H1 (cell line): ENCODE measurements at regions of chr10 and their contacts with region 1.

Region 1: DNA sequence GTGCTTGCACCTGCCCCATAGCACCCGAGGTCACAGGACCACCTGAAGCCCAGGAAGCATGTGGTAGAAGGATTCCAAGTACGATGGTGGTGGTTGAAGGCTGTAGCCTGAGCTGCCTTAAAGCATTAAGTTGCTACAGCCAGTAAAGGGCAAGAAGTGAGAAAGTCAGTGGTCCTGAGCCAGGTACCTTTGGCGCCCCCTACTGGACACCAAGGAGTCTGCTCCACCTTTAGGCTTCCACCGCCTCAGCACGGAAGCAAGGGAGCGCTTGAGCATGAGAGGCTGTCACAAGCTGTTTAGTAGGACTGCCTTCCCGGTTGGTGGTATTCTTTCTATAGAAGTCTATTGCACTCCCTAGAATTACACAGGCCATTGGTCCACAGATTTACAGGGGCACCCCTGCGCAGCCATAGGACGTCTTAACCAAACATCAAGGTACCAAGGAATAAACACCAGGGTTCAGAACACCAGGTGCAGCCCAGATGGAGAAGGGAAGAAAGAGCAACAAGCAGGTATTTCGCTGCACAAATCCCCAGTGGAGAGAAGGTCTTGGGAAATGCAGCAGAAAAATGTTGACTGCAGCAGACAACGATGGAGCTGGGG is 2.2 kb downstream of the CRTAC1 start:
- DNase-seq: peak; percentile 34 to 89
- H3K4me3 ChIP-seq: no peak overlapping the region
- H3K27ac ChIP-seq: no peak overlapping the region
- H3K4me1 ChIP-seq: peaks cover 2 to 7% (median 6%) of the 10 kb centered on the region in 4 experiments; a peak in 5 of 7 replicates
- H3K27me3 ChIP-seq: peaks cover 40 to 50% (median 49%) of the 10 kb centered on the region in 4 experiments
- CTCF ChIP-seq: peak; percentile 86 to 98 (median 97)
- EP300 ChIP-seq: no peak
- POLR2A ChIP-seq: no peak
- RAD21 ChIP-seq: peak; percentile 81 to 91

Region 2: GRCh38 chr10:97888641-97889262 is 139.5 kb before region 1 on chr10:
- CTCF ChIA-PET with region 1: interaction called, 20 read pairs
- POLR2A ChIA-PET with region 1: interaction called, 11 read pairs
- DNase-seq: peak in 1 of 2 experiments; percentile 36
- H3K4me3 ChIP-seq: peak overlapping the region in 1 of 4 experiments; percentile 40; a peak in 1 of 8 replicates
- H3K27ac ChIP-seq: no peak overlapping the region
- H3K4me1 ChIP-seq: peaks cover 0 to 18% (median 13%) of the 10 kb centered on the region in 4 experiments; a peak in 6 of 7 replicates
- H3K27me3 ChIP-seq: no peaks in the 10 kb centered on the region; a peak in 1 of 7 replicates
- CTCF ChIP-seq: peak in 1 of 3 experiments; percentile 3; a peak in 1 of 4 replicates
- EP300 ChIP-seq: no peak
- POLR2A ChIP-seq: no peak
- RAD21 ChIP-seq: no peak

Region 3: DNA sequence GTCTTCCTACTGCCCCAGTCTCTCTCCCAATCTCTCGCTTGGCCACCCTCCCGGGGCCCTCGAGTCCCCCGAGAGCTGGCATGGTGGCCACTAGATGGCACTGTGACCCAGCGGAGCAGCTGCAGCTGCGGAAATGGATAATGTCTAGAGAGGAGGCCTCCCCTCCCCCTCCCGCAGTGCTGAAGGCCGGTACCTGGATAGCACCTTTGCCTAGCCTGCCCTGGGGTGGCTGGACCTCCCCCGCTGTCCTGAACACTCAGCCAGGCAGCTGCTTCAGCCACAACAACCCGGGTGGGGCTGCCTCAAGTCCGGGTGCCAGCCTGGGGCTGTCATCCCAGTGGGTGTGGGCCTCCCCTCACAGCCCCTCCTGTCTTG is 113.4 kb before region 1 on chr10:
- CTCF ChIA-PET with region 1: interaction called, 50 read pairs
- POLR2A ChIA-PET with region 1: no interaction called
- DNase-seq: peak; percentile 46 to 95
- H3K4me3 ChIP-seq: no peak overlapping the region
- H3K27ac ChIP-seq: no peak overlapping the region
- H3K4me1 ChIP-seq: peaks cover 0 to 6% (median 1%) of the 10 kb centered on the region in 4 experiments; a peak in 2 of 7 replicates
- H3K27me3 ChIP-seq: peaks cover 0 to 6% (median 1%) of the 10 kb centered on the region in 4 experiments; a peak in 3 of 7 replicates
- CTCF ChIP-seq: peak; percentile 75 to 97 (median 87)
- EP300 ChIP-seq: 0 out of 3 replicates have a peak, but pooled peaks of 1 of the 2 experiments have one; percentile 24
- POLR2A ChIP-seq: no peak
- RAD21 ChIP-seq: peak; percentile 99

Region 4: DNA sequence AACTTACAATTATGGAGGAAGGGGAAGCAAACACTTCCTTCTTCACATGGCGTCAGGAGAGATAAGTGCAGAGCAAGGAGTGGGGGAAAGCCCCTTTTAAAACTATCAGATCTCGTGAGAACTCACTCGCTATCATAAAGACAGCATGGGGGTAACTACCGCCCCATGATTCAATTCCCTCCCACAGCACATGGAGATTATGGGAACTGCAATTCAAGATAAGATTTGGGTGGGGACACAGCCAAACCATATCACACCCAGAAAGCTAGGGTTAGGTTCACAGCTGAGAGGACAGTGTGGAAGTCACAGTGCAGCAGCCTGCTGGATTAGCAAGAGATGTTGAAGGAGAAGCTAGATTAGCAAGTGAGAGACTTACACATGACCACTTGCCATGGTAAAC is 79.4 kb before region 1 on chr10:
- CTCF ChIA-PET with region 1: interaction called, 12 read pairs
- POLR2A ChIA-PET with region 1: interaction called, 3 read pairs
- DNase-seq: no peak
- H3K4me3 ChIP-seq: no peak overlapping the region
- H3K27ac ChIP-seq: no peak overlapping the region
- H3K4me1 ChIP-seq: no peaks in the 10 kb centered on the region
- H3K27me3 ChIP-seq: no peaks in the 10 kb centered on the region; a peak in 1 of 7 replicates
- CTCF ChIP-seq: no peak
- EP300 ChIP-seq: no peak
- POLR2A ChIP-seq: no peak
- RAD21 ChIP-seq: no peak

Region 5: DNA sequence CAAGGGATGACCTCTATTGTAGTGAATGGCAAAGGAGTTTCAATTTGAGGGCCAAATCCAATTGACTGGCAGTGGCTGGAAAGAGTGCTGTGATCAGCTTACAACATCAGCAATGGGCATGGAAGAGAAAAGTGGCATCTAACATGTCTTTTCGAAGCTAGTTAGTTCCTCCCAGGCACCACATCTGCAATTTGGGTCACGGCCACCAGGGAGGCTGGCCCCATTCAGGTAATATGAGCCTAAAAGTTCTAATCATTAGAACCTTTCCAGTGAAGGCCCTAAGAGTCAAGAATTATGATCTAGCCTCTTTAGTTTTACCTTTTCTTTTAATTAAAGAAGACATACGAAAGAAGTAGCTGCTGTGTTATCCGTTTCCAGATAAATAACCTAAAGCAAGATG is 15.1 kb before region 1 on chr10:
- CTCF ChIA-PET with region 1: interaction called, 120 read pairs
- POLR2A ChIA-PET with region 1: interaction called, 7 read pairs
- DNase-seq: no peak
- H3K4me3 ChIP-seq: no peak overlapping the region
- H3K27ac ChIP-seq: no peak overlapping the region
- H3K4me1 ChIP-seq: peaks cover 0 to 3% (median under 1%) of the 10 kb centered on the region in 4 experiments; a peak in 1 of 7 replicates
- H3K27me3 ChIP-seq: no peaks in the 10 kb centered on the region; a peak in 1 of 7 replicates
- CTCF ChIP-seq: peak; percentile 15 to 59 (median 55); a peak in 3 of 4 replicates
- EP300 ChIP-seq: no peak
- POLR2A ChIP-seq: no peak
- RAD21 ChIP-seq: peak in 1 of 2 experiments; percentile 11; a peak in 1 of 4 replicates

Region 6: GRCh38 chr10:98115031-98115787 is 86.9 kb after region 1 on chr10:
- CTCF ChIA-PET with region 1: no interaction called
- POLR2A ChIA-PET with region 1: no interaction called
- DNase-seq: no peak
- H3K4me3 ChIP-seq: no peak overlapping the region
- H3K27ac ChIP-seq: no peak overlapping the region
- H3K4me1 ChIP-seq: no peaks in the 10 kb centered on the region
- H3K27me3 ChIP-seq: no peaks in the 10 kb centered on the region
- CTCF ChIP-seq: no peak
- EP300 ChIP-seq: no peak
- POLR2A ChIP-seq: no peak
- RAD21 ChIP-seq: no peak